A673 (cell line): ENCODE measurements at regions of chr13 and their contacts with region 1.

Region 1: DNA sequence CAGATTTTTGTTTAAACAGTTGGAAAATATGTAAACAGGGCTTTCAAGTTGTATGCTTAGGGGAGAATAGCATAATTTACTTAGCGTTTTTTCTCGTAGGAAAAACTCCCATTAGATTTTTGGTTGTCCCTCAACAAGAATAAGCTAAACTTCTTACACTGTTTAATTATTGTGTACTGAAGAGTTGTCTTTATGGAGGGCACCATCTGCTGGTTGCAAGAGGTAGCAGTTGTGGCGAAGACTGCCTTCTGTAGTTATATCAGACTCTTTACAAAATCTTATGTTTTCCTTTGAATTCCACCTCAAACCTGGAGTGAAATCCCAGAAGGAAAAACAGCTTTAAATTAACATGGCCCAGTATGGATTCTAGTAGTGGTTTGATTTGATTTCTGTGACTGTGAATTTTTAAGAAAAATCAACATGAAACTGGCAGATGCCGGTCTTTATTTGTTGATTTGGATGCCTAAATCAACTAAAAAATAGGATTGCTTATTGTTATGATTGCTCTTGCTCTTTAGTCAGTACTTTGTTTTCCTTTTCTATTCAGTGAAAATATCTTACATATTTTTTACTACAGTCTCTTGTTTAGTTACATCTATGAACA is 53.4 kb downstream of the PDS5B start:
- DNase-seq: peak; percentile 80
- H3K4me3 ChIP-seq: no peak overlapping the region
- H3K27ac ChIP-seq: no peak overlapping the region
- H3K4me1 ChIP-seq: peaks cover 30% of the 10 kb centered on the region
- H3K27me3 ChIP-seq: no peaks in the 10 kb centered on the region
- CTCF ChIP-seq: peak; percentile 90

Region 2: GRCh38 chr13:32669030-32669646 is 29.5 kb after region 1 on chr13:
- CTCF ChIA-PET with region 1: interaction called, 10 read pairs
- POLR2A ChIA-PET with region 1: no interaction called
- intact Hi-C with region 1: no loop called
- DNase-seq: peak; percentile 76
- H3K4me3 ChIP-seq: no peak overlapping the region
- H3K27ac ChIP-seq: no peak overlapping the region
- H3K4me1 ChIP-seq: no peaks in the 10 kb centered on the region
- H3K27me3 ChIP-seq: no peaks in the 10 kb centered on the region
- CTCF ChIP-seq: peak; percentile 86